ENCODE measurements at regions of chr2 and their contacts with region 1.

Region 1: GRCh38 chr2:65129826-65130663 is at the start of gene RAB1A:
- DNase-seq: peak; percentile 99
- ATAC-seq: peak; percentile 98
- H3K4me3 ChIP-seq: peak within 1 kb of the TSS; percentile 89 to 98 (median 97)
- H3K27ac ChIP-seq: peak within 1 kb of the TSS; percentile 95
- H3K4me1 ChIP-seq: peaks cover 69% of the 10 kb centered on the region
- H3K27me3 ChIP-seq: peaks cover 0 to 4% of the 10 kb centered on the region in 2 experiments; a peak in 1 of 5 replicates
- CTCF ChIP-seq: peak; percentile 80
- EP300 ChIP-seq: no peak
- POLR2A ChIP-seq: peak; percentile 88 to 93
- RAD21 ChIP-seq: no peak
- total RNA-seq, gene RAB1A: 206 and 311 TPM in 2 replicates

Region 2: DNA sequence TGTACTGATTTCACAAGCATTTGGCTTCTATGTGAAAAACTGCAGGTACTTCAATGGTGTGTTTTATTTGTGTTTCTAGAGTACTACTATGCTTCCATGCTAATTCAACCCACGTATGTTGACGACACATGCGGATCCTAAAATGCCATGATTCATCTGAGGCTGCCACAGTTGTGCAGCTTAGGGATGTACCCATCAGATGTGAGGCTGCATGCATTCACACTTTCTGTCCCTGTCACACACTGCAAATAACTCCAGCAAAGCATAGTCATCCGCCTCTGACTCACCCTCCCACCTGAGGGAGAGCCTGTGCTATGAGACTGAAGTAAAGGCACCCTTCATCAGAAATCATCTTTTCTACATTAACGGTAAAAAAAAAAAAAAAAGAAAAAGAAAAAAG is 454.2 kb before region 1 on chr2:
- CTCF ChIA-PET with region 1: no interaction called
- POLR2A ChIA-PET with region 1: no interaction called
- in situ Hi-C with region 1: no loop called
- intact Hi-C with region 1: no loop called
- DNase-seq: peak; percentile 51
- ATAC-seq: peak; percentile 54; the same call in 1 of the 3 replicates
- H3K4me3 ChIP-seq: no peak overlapping the region
- H3K27ac ChIP-seq: no peak overlapping the region
- H3K4me1 ChIP-seq: peaks cover 22% of the 10 kb centered on the region
- H3K27me3 ChIP-seq: no peaks in the 10 kb centered on the region
- CTCF ChIP-seq: no peak
- EP300 ChIP-seq: no peak
- POLR2A ChIP-seq: no peak
- RAD21 ChIP-seq: no peak

Region 3: GRCh38 chr2:65045651-65046050 is 84.4 kb before region 1 on chr2:
- CTCF ChIA-PET with region 1: no interaction called
- POLR2A ChIA-PET with region 1: no interaction called
- in situ Hi-C with region 1: no loop called
- intact Hi-C with region 1: no loop called
- DNase-seq: no peak
- ATAC-seq: no peak
- H3K4me3 ChIP-seq: no peak overlapping the region
- H3K27ac ChIP-seq: no peak overlapping the region
- H3K4me1 ChIP-seq: peaks cover 8% of the 10 kb centered on the region
- H3K27me3 ChIP-seq: no peaks in the 10 kb centered on the region
- CTCF ChIP-seq: no peak
- EP300 ChIP-seq: no peak
- POLR2A ChIP-seq: no peak
- RAD21 ChIP-seq: no peak

Region 4: GRCh38 chr2:65096948-65097347 is 33.1 kb before region 1 on chr2:
- CTCF ChIA-PET with region 1: no interaction called
- POLR2A ChIA-PET with region 1: interaction called, 7 read pairs
- in situ Hi-C with region 1: no loop called
- intact Hi-C with region 1: loop called (anchors 5 kb)
- DNase-seq: no peak
- ATAC-seq: no peak
- H3K4me3 ChIP-seq: no peak overlapping the region
- H3K27ac ChIP-seq: no peak overlapping the region
- H3K4me1 ChIP-seq: peaks cover 19% of the 10 kb centered on the region
- H3K27me3 ChIP-seq: no peaks in the 10 kb centered on the region
- CTCF ChIP-seq: no peak
- EP300 ChIP-seq: no peak
- POLR2A ChIP-seq: no peak
- RAD21 ChIP-seq: no peak

Region 5: GRCh38 chr2:65116645-65117044 is 13.4 kb before region 1 on chr2:
- CTCF ChIA-PET with region 1: no interaction called
- POLR2A ChIA-PET with region 1: interaction called, 20 read pairs
- in situ Hi-C with region 1: no loop called
- intact Hi-C with region 1: loop called (anchors 2 kb)
- DNase-seq: no peak
- ATAC-seq: peak; percentile 53; the same call in 2 of the 3 replicates
- H3K4me3 ChIP-seq: no peak overlapping the region
- H3K27ac ChIP-seq: no peak overlapping the region
- H3K4me1 ChIP-seq: peaks cover 47% of the 10 kb centered on the region
- H3K27me3 ChIP-seq: no peaks in the 10 kb centered on the region
- CTCF ChIP-seq: no peak
- EP300 ChIP-seq: no peak
- POLR2A ChIP-seq: no peak
- RAD21 ChIP-seq: no peak

Region 6: DNA sequence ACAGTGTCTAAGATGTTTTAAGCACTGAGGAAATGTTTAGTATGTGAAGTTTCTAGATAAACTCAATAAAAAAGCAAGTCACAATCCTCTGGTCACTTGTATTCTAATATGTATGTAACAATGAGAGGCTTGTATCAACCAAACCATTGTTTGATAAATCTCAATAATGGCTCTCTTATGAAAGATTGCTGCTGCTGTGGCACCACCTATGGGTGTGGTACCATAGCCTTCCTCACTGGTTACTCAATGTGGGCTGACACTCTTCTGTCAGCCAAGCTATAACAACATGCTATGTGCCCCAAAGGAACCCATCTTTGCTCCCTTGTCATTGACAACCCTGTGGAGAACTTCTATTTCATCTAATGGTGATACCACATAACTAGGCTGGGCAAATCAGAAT is 12.5 kb after region 1 on chr2:
- CTCF ChIA-PET with region 1: no interaction called
- POLR2A ChIA-PET with region 1: interaction called, 11 read pairs
- in situ Hi-C with region 1: no loop called
- intact Hi-C with region 1: no loop called
- DNase-seq: no peak
- ATAC-seq: peak; percentile 78
- H3K4me3 ChIP-seq: no peak overlapping the region
- H3K27ac ChIP-seq: no peak overlapping the region
- H3K4me1 ChIP-seq: peaks cover 3% of the 10 kb centered on the region
- H3K27me3 ChIP-seq: peaks cover 0 to 8% of the 10 kb centered on the region in 2 experiments; a peak in 2 of 5 replicates
- CTCF ChIP-seq: peak; percentile 29
- EP300 ChIP-seq: no peak
- POLR2A ChIP-seq: no peak
- RAD21 ChIP-seq: no peak

Region 7: GRCh38 chr2:65169760-65170136 is 39.7 kb after region 1 on chr2:
- CTCF ChIA-PET with region 1: interaction called, 3 read pairs
- POLR2A ChIA-PET with region 1: no interaction called
- in situ Hi-C with region 1: no loop called
- intact Hi-C with region 1: loop called (anchors 5 kb)
- DNase-seq: no peak
- ATAC-seq: no peak
- H3K4me3 ChIP-seq: no peak overlapping the region
- H3K27ac ChIP-seq: no peak overlapping the region
- H3K4me1 ChIP-seq: peaks cover 54% of the 10 kb centered on the region
- H3K27me3 ChIP-seq: peaks cover 2 to 4% of the 10 kb centered on the region in 2 experiments; a peak in 2 of 5 replicates
- CTCF ChIP-seq: no peak
- EP300 ChIP-seq: no peak
- POLR2A ChIP-seq: no peak
- RAD21 ChIP-seq: no peak

Region 8: GRCh38 chr2:65227425-65228262 is 97.6 kb after region 1 on chr2 and contains the start of gene ACTR2:
- CTCF ChIA-PET with region 1: no interaction called
- POLR2A ChIA-PET with region 1: interaction called, 41 read pairs
- in situ Hi-C with region 1: no loop called
- intact Hi-C with region 1: loop called (anchors 5 kb)
- DNase-seq: peak; percentile 95
- ATAC-seq: peak; percentile 97
- H3K4me3 ChIP-seq: peak within 1 kb of the TSS; percentile 76 to 99 (median 98)
- H3K27ac ChIP-seq: peak within 1 kb of the TSS; percentile 94
- H3K4me1 ChIP-seq: peaks cover 44% of the 10 kb centered on the region
- H3K27me3 ChIP-seq: peaks cover 0 to 3% of the 10 kb centered on the region in 2 experiments; a peak in 1 of 5 replicates
- CTCF ChIP-seq: peak; percentile 13; the same call in 1 of the 2 replicates
- EP300 ChIP-seq: peak in 1 of 2 experiments; percentile 29; a peak in 1 of 4 replicates
- POLR2A ChIP-seq: peak; percentile 90 to 95
- RAD21 ChIP-seq: peak; percentile 66
- total RNA-seq, gene ACTR2: 100 and 211 TPM in 2 replicates

Region 9: GRCh38 chr2:65545837-65546805 is 416.1 kb after region 1 on chr2:
- CTCF ChIA-PET with region 1: no interaction called
- POLR2A ChIA-PET with region 1: no interaction called
- in situ Hi-C with region 1: no loop called
- intact Hi-C with region 1: no loop called
- DNase-seq: no peak
- ATAC-seq: peak; percentile 37; the same call in 2 of the 3 replicates
- H3K4me3 ChIP-seq: no peak overlapping the region
- H3K27ac ChIP-seq: no peak overlapping the region
- H3K4me1 ChIP-seq: peaks cover 19% of the 10 kb centered on the region
- H3K27me3 ChIP-seq: no peaks in the 10 kb centered on the region
- CTCF ChIP-seq: no peak
- EP300 ChIP-seq: no peak
- POLR2A ChIP-seq: no peak
- RAD21 ChIP-seq: no peak

Region 10: GRCh38 chr2:66790651-66791181 is 1660.7 kb after region 1 on chr2:
- CTCF ChIA-PET with region 1: no interaction called
- POLR2A ChIA-PET with region 1: no interaction called
- in situ Hi-C with region 1: no loop called
- intact Hi-C with region 1: no loop called
- DNase-seq: no peak
- ATAC-seq: no peak
- H3K4me3 ChIP-seq: no peak overlapping the region
- H3K27ac ChIP-seq: no peak overlapping the region
- H3K4me1 ChIP-seq: no peaks in the 10 kb centered on the region
- H3K27me3 ChIP-seq: no peaks in the 10 kb centered on the region
- CTCF ChIP-seq: no peak
- EP300 ChIP-seq: no peak
- POLR2A ChIP-seq: no peak
- RAD21 ChIP-seq: no peak